ENCODE measurements at regions of chr1 and their contacts with region 1.

Region 1: DNA sequence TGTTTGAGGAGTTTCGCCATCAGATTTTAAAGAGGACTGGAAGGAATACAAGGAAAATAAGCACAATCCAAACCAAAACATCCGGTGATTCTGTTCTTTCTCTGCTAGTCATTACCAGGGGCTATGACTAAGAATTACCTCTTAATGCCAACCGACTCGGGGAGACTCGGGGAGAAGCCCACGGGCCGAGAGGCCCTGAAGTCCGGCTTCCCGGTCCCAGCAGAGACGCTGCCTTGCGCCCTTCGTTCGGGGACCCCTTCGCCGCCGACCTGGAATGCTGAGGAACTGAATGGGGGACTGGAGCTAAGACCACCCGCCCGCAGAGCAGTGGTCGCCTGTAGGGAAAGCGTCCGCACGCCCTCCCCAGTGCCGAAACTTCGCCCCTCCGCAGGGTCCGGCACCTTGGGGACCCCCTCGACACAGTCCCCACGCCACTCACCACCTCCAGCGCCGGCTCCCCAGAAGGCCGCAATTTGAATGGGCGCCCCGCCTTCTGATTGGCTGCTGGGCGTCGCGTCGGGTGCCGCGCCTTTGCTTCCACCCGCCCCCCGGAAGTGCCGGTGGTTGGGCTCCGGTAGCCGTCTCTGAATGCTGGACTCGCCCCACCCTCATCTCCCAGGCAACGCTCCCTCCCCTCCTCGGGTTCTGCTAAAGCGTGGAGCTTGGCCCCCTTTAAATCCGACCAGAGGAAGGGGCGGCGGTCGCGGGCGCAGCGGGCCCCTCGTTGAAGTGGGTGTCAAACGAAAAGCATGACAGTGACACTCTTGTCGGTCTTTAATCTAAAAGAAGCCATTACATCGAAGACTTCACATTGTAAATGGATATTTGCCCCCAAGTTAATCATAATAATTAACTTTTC is at the start of gene KIF14:
- DNase-seq: peak; percentile 97
- CTCF ChIP-seq: no peak

Region 2: GRCh38 chr1:200634261-200635122 is 14.0 kb after region 1 on chr1:
- CTCF ChIA-PET with region 1: interaction called, 27 read pairs
- POLR2A ChIA-PET with region 1: interaction called, 7 read pairs
- DNase-seq: no peak
- CTCF ChIP-seq: peak; percentile 31

Region 3: GRCh38 chr1:200738740-200739498 is 118.4 kb after region 1 on chr1 and contains the start of gene CAMSAP2:
- CTCF ChIA-PET with region 1: interaction called, 11 read pairs
- POLR2A ChIA-PET with region 1: no interaction called
- DNase-seq: peak; percentile 82
- CTCF ChIP-seq: no peak

Region 4: GRCh38 chr1:200802865-200803512 is 182.5 kb after region 1 on chr1:
- CTCF ChIA-PET with region 1: interaction called, 76 read pairs
- POLR2A ChIA-PET with region 1: interaction called, 4 read pairs
- DNase-seq: peak; percentile 58
- CTCF ChIP-seq: peak; percentile 97

Region 5: DNA sequence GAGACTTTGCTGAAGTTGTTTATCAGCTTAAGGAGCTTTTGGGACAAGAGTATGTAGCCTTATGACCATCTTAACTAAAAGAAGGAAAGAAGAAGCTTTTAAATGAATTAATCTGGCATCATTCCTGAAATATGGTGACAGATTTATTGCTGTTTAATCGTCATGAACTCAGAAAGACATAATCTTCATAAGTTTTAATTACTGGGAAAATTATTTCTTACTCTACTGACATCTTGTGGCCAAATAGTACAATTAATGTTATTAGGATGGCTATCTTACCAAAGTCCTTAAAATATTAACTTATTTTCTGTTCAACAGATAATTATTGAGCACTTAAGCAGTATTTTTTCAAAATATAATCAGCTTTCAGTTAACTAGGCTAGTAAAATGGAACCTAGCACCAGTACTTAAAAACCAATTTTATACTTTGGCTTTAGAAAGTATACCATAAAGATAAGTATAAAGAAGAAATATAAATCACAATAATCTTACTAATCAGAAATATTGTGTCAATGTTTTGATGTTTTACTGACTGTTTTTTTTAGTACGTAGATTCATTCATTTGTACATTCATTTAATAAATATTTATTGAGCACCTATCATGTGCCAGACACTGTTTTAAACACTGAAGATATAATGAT is 217.5 kb after region 1 on chr1:
- CTCF ChIA-PET with region 1: interaction called, 15 read pairs
- POLR2A ChIA-PET with region 1: no interaction called
- DNase-seq: no peak
- CTCF ChIP-seq: peak; percentile 28